CD4-positive, alpha-beta memory T cell (primary cell): ENCODE measurements at regions of chr14 and their contacts with region 1.

Region 1: GRCh38 chr14:105375635-105376057 is 22.7 kb upstream of the TEX22 start:
- DNase-seq: no peak
- H3K4me3 ChIP-seq: no peak overlapping the region
- H3K4me3 Mint-ChIP-seq: no peak overlapping the region
- H3K27ac ChIP-seq: no peak overlapping the region
- H3K27ac Mint-ChIP-seq: peak overlapping the region in 1 of 7 donors; percentile 44
- H3K4me1 ChIP-seq: no peaks in the 10 kb centered on the region
- H3K4me1 Mint-ChIP-seq: peaks cover 9 to 14% (median 12%) of the 10 kb centered on the region in 4 donors
- H3K27me3 ChIP-seq: no peaks in the 10 kb centered on the region
- H3K27me3 Mint-ChIP-seq: no peaks in the 10 kb centered on the region

Region 2: DNA sequence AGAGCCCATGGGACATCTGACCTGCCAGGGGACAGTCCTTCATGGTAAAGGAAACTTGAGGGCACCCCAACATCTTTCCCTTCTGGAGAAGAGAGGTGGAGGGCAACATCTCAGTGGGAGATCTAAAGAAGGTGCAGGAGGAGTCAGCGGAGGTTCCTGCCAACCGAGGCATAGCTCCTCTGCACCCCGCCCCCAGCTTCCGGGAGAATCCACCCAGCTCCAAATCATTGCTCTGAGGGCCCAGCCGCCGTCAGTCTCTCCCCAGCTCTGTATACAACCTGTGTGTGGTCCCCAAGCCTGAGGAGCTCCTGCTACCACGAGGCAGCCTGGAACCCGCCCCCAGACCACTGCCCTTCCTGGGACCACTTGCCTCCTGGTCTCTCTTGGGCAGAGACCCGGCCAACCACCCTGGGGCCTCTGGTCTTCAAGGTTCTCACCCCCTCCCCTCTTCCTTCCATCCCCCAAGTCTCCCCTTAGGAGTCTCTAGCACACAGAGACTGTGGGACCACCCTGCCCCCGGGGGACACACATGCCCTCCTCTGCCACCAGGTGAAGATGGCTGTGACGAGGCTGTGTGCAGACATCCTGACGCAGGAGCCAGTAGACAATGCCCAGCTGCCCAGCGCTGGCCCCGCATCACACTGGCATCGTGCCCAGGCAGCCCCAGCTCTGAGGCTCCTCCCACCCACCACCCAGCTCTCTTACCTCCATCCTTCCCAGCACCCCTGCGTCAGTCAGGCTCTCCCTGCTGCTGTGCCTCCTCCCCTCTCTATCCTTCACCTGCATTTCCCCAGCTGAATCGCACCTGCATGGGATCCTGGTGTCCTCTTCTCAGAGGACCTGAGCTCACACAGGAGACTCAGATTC is 181.5 kb before region 1 on chr14:
- CTCF ChIA-PET with region 1: no interaction called
- POLR2A ChIA-PET with region 1: no interaction called
- intact Hi-C with region 1: no loop called
- DNase-seq: peak in 1 of 5 donors; percentile 66
- H3K4me3 ChIP-seq: no peak overlapping the region
- H3K4me3 Mint-ChIP-seq: peak overlapping the region in 7 of 8 donors; percentile 21 to 74 (median 34)
- H3K27ac ChIP-seq: no peak overlapping the region
- H3K27ac Mint-ChIP-seq: peak overlapping the region in 3 of 7 donors; percentile 64 to 91 (median 79)
- H3K4me1 ChIP-seq: peaks cover 47% of the 10 kb centered on the region
- H3K4me1 Mint-ChIP-seq: peaks cover 14 to 39% (median 21%) of the 10 kb centered on the region in 4 donors
- H3K27me3 ChIP-seq: peaks cover 8% of the 10 kb centered on the region
- H3K27me3 Mint-ChIP-seq: peaks cover 17 to 23% of the 10 kb centered on the region in 2 donors

Region 3: DNA sequence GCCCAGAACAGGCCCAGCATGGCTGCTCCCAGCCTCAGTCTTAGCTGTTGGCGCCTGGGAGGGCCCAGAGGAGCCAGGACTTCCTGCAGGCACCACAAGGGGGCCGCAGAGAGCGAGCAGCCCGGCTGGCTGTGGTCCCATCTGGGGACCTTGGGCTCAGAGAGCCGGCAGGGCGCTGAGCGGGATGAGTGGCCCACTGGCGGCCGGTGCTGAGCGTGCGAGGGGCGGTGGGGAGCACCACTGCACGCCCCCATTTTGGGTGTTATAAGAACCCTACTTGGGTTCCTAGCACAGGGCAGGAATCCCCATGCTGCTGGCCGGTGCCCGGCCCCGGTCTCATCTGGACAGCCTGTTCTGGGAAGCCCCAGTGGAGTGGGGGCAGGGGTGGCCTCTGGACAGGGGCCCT is 73.1 kb after region 1 on chr14:
- CTCF ChIA-PET with region 1: interaction called, 15 read pairs
- POLR2A ChIA-PET with region 1: interaction called, 3 read pairs
- intact Hi-C with region 1: loop called (anchors 10 kb)
- DNase-seq: peak; percentile 52 to 77 (median 64)
- H3K4me3 ChIP-seq: no peak overlapping the region
- H3K4me3 Mint-ChIP-seq: no peak overlapping the region
- H3K27ac ChIP-seq: no peak overlapping the region
- H3K27ac Mint-ChIP-seq: peak overlapping the region in 2 of 7 donors; percentile 15 to 42
- H3K4me1 ChIP-seq: no peaks in the 10 kb centered on the region
- H3K4me1 Mint-ChIP-seq: no peaks in the 10 kb centered on the region
- H3K27me3 ChIP-seq: no peaks in the 10 kb centered on the region
- H3K27me3 Mint-ChIP-seq: no peaks in the 10 kb centered on the region

Region 4: DNA sequence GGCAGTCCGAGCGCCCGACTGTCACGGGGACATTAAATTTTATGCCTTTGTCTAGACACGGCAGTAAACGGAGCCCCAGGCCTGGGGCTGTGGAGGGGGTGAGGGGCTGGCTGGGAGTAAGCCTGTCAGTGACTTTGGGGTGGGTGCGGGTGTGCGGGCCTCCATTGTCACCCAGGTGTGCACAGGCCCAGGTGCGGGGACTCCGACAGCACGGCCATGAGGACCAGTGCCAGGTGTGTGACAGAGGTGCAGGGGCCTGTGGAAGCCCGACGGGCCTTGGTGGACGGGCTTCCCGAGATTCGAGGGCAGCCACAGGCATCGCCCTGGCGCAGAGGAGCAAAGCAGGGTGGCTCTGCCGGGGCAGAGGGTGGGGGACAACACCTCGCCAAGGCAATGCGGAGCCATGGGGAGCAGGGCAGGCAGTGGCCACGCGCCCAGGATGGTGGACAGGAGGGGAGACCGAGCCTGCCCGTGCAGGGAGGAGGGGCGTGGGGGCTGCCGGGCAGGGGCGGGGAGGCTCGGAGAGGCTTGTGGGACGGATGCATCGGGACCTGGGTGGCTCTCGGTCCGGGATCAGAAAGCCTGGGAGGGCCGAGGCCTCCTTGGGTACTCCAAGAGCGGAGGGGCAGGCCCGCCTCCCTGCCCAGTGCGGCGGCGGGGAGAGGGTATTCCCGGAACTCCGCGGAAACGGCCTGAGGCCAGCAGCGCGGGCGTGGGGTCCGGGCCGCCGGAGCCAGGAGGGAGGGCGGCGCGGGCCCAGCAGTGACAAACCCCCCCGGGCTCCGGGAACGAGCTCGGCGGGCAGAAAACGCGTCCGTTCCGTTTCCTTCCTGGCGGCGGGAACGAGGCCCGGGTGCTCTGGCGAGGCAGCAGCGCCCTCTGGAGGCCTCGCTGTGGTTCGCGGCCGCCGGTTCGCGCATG is 152.3 kb after region 1 on chr14:
- CTCF ChIA-PET with region 1: interaction called, 24 read pairs
- POLR2A ChIA-PET with region 1: interaction called, 6 read pairs
- intact Hi-C with region 1: loop called (anchors 1 kb)
- DNase-seq: peak; percentile 69 to 83 (median 78)
- H3K4me3 ChIP-seq: peak overlapping the region in 1 of 2 donors; percentile 54
- H3K4me3 Mint-ChIP-seq: peak overlapping the region; percentile 27 to 84 (median 66)
- H3K27ac ChIP-seq: no peak overlapping the region
- H3K27ac Mint-ChIP-seq: peak overlapping the region in 4 of 7 donors; percentile 43 to 83 (median 57)
- H3K4me1 ChIP-seq: peaks cover 29% of the 10 kb centered on the region
- H3K4me1 Mint-ChIP-seq: peaks cover 4 to 41% (median 19%) of the 10 kb centered on the region in 4 donors
- H3K27me3 ChIP-seq: no peaks in the 10 kb centered on the region
- H3K27me3 Mint-ChIP-seq: peaks cover 1 to 2% of the 10 kb centered on the region in 2 donors